ENCODE measurements at regions of chr10 and their contacts with region 1.

Region 1: DNA sequence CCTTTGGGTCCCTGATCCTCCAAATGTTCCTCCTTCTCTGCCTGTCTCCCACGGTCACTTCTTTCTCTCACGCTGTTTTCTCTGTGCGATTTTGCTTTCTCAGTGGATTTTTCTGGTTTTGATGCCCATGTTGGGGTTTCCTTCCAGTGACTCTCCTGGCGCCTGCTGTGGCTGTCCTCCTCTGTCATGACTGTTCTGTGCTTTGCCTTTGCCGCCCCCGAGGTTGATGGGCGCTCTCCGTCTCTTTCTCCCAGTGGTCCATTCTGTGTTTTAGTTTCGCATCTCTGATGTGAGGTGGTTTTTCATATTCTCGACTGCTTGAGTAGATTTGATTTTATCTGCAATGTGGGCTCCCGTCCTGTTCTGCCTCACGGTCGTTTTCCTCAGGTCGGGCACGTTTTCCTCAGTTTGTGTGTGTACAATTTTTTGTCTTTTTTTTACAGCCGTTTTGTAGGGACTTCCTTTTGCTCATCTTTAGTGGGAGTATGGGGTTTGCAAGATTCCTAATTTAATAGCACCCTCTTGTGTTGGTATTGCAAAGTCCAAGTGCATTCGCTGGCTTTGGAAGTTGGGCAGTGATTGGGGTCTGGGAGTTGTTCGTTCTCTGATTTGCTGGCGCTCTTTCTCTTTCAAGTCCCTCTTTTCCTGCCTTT is 100.0 kb downstream of the INPP5A start:
- DNase-seq: no peak
- H3K4me3 Mint-ChIP-seq: no peak overlapping the region
- H3K27ac Mint-ChIP-seq: no peak overlapping the region
- H3K4me1 Mint-ChIP-seq: peaks cover 20% of the 10 kb centered on the region
- H3K27me3 Mint-ChIP-seq: peaks cover 7% of the 10 kb centered on the region

Region 2: DNA sequence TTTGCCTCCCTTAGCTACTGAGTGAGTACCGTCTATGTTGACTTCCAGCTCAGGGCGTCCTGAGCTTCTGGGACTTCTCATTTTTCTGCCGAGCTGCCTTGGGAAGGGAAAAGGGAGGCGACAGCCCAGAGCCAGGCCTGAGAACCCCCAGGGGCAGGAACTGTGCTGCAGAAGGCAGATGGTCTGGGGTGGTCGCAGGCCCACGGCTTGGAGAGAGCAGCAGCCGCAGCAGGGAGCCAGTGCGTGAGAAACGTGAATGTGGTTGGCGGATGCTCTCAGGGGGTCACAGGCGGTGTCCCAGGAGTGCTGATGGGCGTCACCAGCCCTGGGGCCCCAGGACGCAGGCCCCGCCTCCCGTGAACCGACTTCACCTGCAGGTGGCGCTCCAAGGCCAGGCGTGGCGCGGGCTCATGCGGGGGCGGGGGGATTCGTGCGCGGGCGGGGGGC is 249.8 kb before region 1 on chr10:
- intact Hi-C with region 1: loop called (anchors 10 kb)
- DNase-seq: peak; percentile 58
- H3K4me3 Mint-ChIP-seq: no peak overlapping the region
- H3K27ac Mint-ChIP-seq: peak overlapping the region; percentile 80
- H3K4me1 Mint-ChIP-seq: peaks cover 2% of the 10 kb centered on the region
- H3K27me3 Mint-ChIP-seq: no peaks in the 10 kb centered on the region

Region 3: GRCh38 chr10:132458593-132459300 is 178.9 kb before region 1 on chr10:
- intact Hi-C with region 1: loop called (anchors 1 kb)
- DNase-seq: peak; percentile 48
- H3K4me3 Mint-ChIP-seq: no peak overlapping the region
- H3K27ac Mint-ChIP-seq: no peak overlapping the region
- H3K4me1 Mint-ChIP-seq: no peaks in the 10 kb centered on the region
- H3K27me3 Mint-ChIP-seq: peaks cover 2% of the 10 kb centered on the region